BJ (cell line): ENCODE measurements at regions of chr1 and their contacts with region 1.

Region 1: DNA sequence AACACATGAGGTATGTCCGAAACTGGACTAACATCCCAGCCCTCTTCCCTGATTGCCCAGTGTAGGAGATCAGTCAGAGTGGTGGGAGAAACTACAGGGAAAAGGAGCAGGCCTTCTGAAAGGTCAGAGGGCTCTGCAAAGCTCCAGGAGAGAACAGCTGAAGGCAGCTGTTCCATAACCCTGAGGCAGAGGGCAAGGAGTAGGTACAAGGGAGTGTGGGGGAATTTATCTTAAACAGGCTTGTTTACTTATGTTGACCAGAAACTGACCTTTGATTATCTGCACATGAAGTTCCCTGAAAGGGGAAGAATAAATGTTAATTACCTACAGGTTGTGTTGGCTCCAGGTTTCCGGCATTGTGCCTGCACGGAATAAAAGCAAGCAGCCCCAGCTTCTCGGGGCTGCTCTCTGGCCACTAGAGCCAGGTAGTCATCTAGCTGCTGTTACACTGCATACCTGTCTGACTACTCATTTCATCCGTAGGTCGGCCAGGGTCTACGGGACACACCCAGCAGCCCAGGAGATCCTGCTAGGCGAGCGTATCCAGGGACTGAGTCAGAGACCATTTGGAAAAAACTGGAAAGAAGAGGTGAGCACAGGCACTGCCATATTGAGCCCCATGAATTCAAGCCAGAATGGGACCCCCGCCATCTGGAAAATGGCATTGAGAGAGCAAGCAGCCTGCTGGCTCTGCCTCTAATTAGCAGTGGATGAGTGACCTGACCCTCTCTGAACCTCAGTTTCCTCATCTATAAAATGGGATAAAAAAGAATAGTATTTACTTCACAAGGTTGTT is 14.9 kb upstream of the PAQR7 start:
- DNase-seq: no peak
- H3K4me3 ChIP-seq: no peak overlapping the region
- H3K27me3 ChIP-seq: no peaks in the 10 kb centered on the region
- CTCF ChIP-seq: no peak

Region 2: DNA sequence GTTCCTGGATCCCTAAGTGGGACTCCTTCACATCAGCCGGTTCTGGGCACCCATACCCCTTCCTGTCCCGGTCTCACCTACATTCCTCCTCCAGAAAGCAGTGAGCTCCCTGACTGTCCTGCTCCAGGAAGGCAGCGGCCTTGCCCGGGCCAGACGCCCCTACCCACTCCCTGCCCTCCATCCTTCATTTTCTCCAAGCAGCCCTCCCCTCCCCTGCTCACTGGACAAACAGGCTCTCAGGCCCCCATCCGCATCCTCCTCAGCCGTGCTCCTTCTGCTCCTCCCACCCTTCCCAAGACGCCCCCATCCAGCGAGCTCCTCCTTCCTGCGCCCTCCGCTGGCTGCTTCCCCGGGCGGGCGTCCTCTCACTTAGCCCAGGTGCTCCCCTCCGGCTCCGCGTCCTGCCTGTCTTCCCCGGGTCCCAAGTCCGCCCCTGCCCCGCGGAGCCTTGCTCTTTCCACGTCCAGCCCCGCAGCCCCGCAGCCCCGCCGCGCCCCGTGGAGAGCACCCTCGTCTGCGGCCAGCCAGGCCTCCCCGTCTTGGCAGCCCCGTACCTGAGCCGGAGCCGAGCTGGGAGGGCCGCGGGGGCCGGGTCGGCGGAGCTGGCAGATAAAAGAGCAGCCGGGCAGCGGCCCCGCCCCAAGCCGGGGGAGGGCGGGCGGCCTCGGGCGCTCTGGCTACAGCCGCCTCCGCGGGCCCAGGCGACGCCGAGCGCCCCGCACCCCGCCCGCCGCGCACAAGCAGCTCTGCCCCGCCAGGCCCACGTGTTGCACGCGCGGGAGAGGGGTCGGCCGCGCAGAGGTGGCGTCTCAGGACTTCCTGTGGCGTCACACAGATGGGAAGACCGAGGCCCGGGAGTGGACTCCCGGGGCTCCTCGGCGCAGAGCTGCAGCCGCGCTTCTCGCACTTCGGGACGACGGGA is 15.2 kb before region 1 on chr1 and contains the start of gene PAQR7:
- CTCF ChIA-PET with region 1: interaction called, 12 read pairs
- POLR2A ChIA-PET with region 1: interaction called, 3 read pairs
- DNase-seq: no peak
- H3K4me3 ChIP-seq: peak within 1 kb of the TSS; percentile 70
- H3K27me3 ChIP-seq: no peaks in the 10 kb centered on the region
- CTCF ChIP-seq: no peak
- polyA plus RNA-seq, gene PAQR7: 10.5 and 12.6 TPM in 2 replicates